ENCODE measurements at regions of chr3 and their contacts with region 1.

Region 1: GRCh38 chr3:170180908-170181879 is at the start of gene PHC3:
- DNase-seq: peak; percentile 83 to 97
- H3K4me3 ChIP-seq: peak within 1 kb of the TSS; percentile 76
- H3K27ac ChIP-seq: peak within 1 kb of the TSS; percentile 51
- H3K4me1 ChIP-seq: peaks cover 19% of the 10 kb centered on the region
- H3K27me3 ChIP-seq: no peaks in the 10 kb centered on the region
- CTCF ChIP-seq: peak; percentile 36; the same call in 1 of the 2 replicates
- total RNA-seq, gene PHC3: 54.7 and 80.8 TPM in 2 replicates

Region 2: GRCh38 chr3:170203457-170203856 is 22.3 kb after region 1 on chr3:
- CTCF ChIA-PET with region 1: no interaction called
- POLR2A ChIA-PET with region 1: interaction called, 14 read pairs
- intact Hi-C with region 1: no loop called
- DNase-seq: no peak
- H3K4me3 ChIP-seq: no peak overlapping the region
- H3K27ac ChIP-seq: no peak overlapping the region
- H3K4me1 ChIP-seq: no peaks in the 10 kb centered on the region
- H3K27me3 ChIP-seq: no peaks in the 10 kb centered on the region
- CTCF ChIP-seq: no peak

Region 3: GRCh38 chr3:170221924-170222646 is 40.9 kb after region 1 on chr3 and contains the start of gene PRKCI:
- CTCF ChIA-PET with region 1: no interaction called
- POLR2A ChIA-PET with region 1: interaction called, 7 read pairs
- intact Hi-C with region 1: loop called (anchors 2 kb)
- DNase-seq: peak; percentile 95 to 97
- H3K4me3 ChIP-seq: peak within 1 kb of the TSS; percentile 68
- H3K27ac ChIP-seq: peak within 1 kb of the TSS; percentile 88
- H3K4me1 ChIP-seq: peaks cover 36% of the 10 kb centered on the region
- H3K27me3 ChIP-seq: no peaks in the 10 kb centered on the region
- CTCF ChIP-seq: no peak
- total RNA-seq, gene PRKCI: 85.4 and 104 TPM in 2 replicates

Region 4: GRCh38 chr3:170257145-170257544 is 76.0 kb after region 1 on chr3:
- CTCF ChIA-PET with region 1: no interaction called
- POLR2A ChIA-PET with region 1: interaction called, 4 read pairs
- intact Hi-C with region 1: loop called (anchors 2 kb)
- DNase-seq: no peak
- H3K4me3 ChIP-seq: no peak overlapping the region
- H3K27ac ChIP-seq: no peak overlapping the region
- H3K4me1 ChIP-seq: peaks cover 25% of the 10 kb centered on the region
- H3K27me3 ChIP-seq: no peaks in the 10 kb centered on the region
- CTCF ChIP-seq: no peak

Region 5: GRCh38 chr3:170307671-170308403 is 126.6 kb after region 1 on chr3:
- CTCF ChIA-PET with region 1: interaction called, 9 read pairs
- POLR2A ChIA-PET with region 1: no interaction called
- intact Hi-C with region 1: loop called (anchors 5 kb)
- DNase-seq: peak; percentile 59 to 99
- H3K4me3 ChIP-seq: no peak overlapping the region
- H3K27ac ChIP-seq: peak overlapping the region; percentile 42
- H3K4me1 ChIP-seq: peaks cover 19% of the 10 kb centered on the region
- H3K27me3 ChIP-seq: no peaks in the 10 kb centered on the region
- CTCF ChIP-seq: no peak

Region 6: GRCh38 chr3:170387950-170388349 is 206.8 kb after region 1 on chr3:
- CTCF ChIA-PET with region 1: interaction called, 5 read pairs
- POLR2A ChIA-PET with region 1: no interaction called
- intact Hi-C with region 1: loop called (anchors 10 kb)
- DNase-seq: peak in 1 of 2 experiments; percentile 64
- H3K4me3 ChIP-seq: no peak overlapping the region
- H3K27ac ChIP-seq: no peak overlapping the region
- H3K4me1 ChIP-seq: no peaks in the 10 kb centered on the region
- H3K27me3 ChIP-seq: no peaks in the 10 kb centered on the region
- CTCF ChIP-seq: peak; percentile 41